Heart left ventricle (tissue), 16 donors: ENCODE measurements at regions of chr20 and their contacts with region 1.

Region 1: DNA sequence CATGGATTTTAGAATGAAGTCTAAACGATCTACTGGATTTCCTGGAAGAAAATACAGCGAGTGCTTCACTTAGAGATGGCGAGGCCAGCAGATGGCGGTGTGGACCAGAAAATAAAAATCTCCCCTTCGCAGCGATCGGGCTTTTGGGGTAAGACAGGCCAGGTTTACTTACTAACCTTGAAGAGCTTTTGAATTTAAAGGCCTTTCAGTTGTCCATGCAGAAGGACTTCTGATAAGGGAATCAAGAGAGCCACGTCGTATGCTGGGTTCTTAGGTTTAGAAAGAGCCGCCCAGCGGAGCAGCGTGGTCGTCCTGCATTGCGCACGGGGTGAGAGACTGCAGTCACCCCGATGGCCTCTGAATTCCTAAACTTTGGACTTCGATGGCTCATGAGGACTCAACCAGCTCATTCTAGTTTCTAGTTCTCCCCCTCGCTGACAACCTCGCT is 125.2 kb upstream of the RALGAPA2 start:
- DNase-seq: peak in 3 of 5 donors; percentile 32 to 40 (median 39)
- ATAC-seq: peak in 2 of 4 donors; percentile 49 to 54
- H3K4me3 ChIP-seq: peak overlapping the region in 8 of 12 donors; percentile 18 to 43 (median 20)
- H3K27ac ChIP-seq: no peak overlapping the region
- H3K4me1 ChIP-seq: peaks cover 0 to 3% (median 0%) of the 10 kb centered on the region in 12 donors
- H3K27me3 ChIP-seq: peaks cover 0 to 45% (median 2%) of the 10 kb centered on the region in 9 donors
- CTCF ChIP-seq: peak; percentile 45 to 80 (median 68)
- POLR2A ChIP-seq: no peak

Region 2: DNA sequence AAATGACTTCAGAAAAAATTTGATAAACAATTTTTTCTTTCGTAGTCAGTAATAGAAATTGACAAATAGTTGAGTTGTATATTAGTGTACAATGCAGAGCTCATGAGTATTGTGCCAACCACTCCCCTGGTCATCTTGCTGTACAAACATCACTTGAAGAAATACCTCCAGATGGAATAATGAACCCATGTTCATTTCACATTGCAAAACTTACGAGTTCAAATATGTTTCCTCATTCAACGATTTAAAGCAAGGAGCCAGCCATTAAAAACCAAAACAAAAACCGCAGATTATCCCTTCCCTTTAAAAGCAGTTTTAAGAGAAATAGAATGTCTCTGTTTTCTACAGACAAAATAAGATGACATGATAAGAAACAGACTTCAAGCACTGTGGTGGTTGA is 187.7 kb before region 1 on chr20:
- intact Hi-C with region 1: no loop called
- DNase-seq: no peak
- ATAC-seq: no peak
- H3K4me3 ChIP-seq: no peak overlapping the region
- H3K27ac ChIP-seq: no peak overlapping the region
- H3K4me1 ChIP-seq: no peaks in the 10 kb centered on the region
- H3K27me3 ChIP-seq: no peaks in the 10 kb centered on the region
- CTCF ChIP-seq: no peak
- POLR2A ChIP-seq: no peak

Region 3: GRCh38 chr20:20786428-20786827 is 51.2 kb before region 1 on chr20:
- intact Hi-C with region 1: loop called in 1 of 10 experiments (anchors 5 kb)
- DNase-seq: peak in 1 of 5 donors; percentile 58
- ATAC-seq: no peak
- H3K4me3 ChIP-seq: no peak overlapping the region
- H3K27ac ChIP-seq: no peak overlapping the region
- H3K4me1 ChIP-seq: peaks cover 0 to 22% (median 17%) of the 10 kb centered on the region in 12 donors
- H3K27me3 ChIP-seq: no peaks in the 10 kb centered on the region
- CTCF ChIP-seq: no peak
- POLR2A ChIP-seq: no peak

Region 4: DNA sequence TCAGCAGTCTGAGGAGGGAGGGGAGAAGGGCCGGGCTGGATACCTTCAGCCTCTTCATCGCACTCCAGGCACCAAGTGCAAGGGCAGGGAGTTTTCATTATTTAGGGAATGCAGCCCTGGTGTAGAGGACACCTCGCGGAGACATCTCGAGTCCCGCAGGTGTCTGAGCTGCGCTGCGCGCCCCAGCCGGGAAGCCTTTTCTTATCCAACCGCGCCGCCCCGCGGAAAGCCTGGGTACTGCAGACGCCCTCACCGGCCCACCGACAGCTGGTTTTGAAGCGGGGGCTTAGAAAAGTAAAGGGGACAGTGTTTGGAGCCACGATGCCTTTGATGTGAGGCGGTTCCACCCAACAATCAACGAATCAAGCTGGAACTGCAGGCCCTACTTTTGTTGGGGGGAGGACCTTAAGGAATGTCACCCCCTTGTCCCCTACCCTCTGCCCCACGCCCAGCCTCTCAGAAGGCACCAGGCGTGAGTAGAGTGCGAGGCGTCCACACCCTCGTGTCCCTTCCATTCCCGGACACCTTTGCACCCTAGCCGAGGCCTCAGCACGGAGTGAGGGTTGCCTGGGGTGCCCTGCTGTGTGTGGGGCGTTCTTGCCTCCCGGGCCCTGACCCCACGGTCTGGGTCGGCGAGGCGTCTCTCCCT is 667.7 kb after region 1 on chr20:
- intact Hi-C with region 1: loop called in 7 of 10 experiments (anchors 5 to 10 kb)
- DNase-seq: peak; percentile 36 to 86 (median 55)
- ATAC-seq: peak in 3 of 4 donors; percentile 48 to 76 (median 70)
- H3K4me3 ChIP-seq: peak overlapping the region in 9 of 12 donors; percentile 22 to 57 (median 44)
- H3K27ac ChIP-seq: no peak overlapping the region
- H3K4me1 ChIP-seq: peaks cover 0 to 31% (median 19%) of the 10 kb centered on the region in 12 donors
- H3K27me3 ChIP-seq: peaks cover 51 to 98% (median 76%) of the 10 kb centered on the region in 9 donors
- CTCF ChIP-seq: peak; percentile 88 to 97 (median 93)
- POLR2A ChIP-seq: no peak

Region 5: DNA sequence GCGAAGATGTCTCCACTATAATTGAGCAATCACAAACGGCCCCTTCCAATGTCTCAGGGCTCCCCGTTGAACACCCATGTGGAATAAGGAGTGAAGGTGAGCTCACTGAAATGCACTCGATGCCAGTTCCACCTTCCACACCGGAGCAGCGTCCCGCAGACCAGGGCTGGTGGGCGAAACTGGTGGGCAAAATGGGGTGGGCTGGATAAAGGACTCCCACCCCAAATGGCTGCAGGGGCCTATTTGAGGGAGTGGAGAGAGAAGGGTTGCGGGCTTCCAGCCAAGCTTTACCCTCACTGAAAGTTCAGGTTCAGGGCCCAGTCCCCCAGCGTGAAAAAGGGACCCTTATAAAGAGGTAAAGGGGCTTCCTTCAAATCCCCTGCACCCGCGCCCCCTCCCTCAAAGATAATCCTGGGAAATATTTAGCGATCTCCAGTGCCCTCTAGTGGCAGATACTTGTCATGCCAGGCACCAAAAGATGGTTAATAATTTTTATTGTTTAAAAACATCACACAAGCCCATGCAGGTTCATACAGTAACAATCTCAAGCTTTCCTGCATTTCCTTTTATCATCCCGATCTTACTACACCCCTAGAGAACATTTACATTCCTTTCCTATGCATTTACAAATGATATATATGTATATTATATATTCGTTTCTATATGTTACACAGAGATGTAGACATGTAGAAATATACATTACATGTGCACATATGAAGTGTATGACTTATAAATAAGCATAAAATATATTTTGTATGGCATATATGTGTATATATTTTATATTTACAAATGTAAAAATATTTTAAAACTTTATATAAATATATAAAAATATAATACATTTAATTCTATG is 734.5 kb after region 1 on chr20:
- intact Hi-C with region 1: loop called in 4 of 10 experiments (anchors 2 to 5 kb)
- DNase-seq: no peak
- ATAC-seq: no peak
- H3K4me3 ChIP-seq: no peak overlapping the region
- H3K27ac ChIP-seq: no peak overlapping the region
- H3K4me1 ChIP-seq: no peaks in the 10 kb centered on the region
- H3K27me3 ChIP-seq: peaks cover 0 to 41% (median 17%) of the 10 kb centered on the region in 9 donors
- CTCF ChIP-seq: peak; percentile 74 to 89 (median 84)
- POLR2A ChIP-seq: no peak

Region 6: GRCh38 chr20:21615617-21616080 is 778.1 kb after region 1 on chr20:
- intact Hi-C with region 1: loop called in 1 of 10 experiments (anchors 2 kb)
- DNase-seq: peak in 4 of 5 donors; percentile 15 to 42 (median 32)
- ATAC-seq: peak in 3 of 4 donors; percentile 54 to 72 (median 64)
- H3K4me3 ChIP-seq: no peak overlapping the region
- H3K27ac ChIP-seq: no peak overlapping the region
- H3K4me1 ChIP-seq: no peaks in the 10 kb centered on the region
- H3K27me3 ChIP-seq: peaks cover 0 to 28% (median 5%) of the 10 kb centered on the region in 9 donors
- CTCF ChIP-seq: peak; percentile 40 to 75 (median 64)
- POLR2A ChIP-seq: no peak

Region 7: DNA sequence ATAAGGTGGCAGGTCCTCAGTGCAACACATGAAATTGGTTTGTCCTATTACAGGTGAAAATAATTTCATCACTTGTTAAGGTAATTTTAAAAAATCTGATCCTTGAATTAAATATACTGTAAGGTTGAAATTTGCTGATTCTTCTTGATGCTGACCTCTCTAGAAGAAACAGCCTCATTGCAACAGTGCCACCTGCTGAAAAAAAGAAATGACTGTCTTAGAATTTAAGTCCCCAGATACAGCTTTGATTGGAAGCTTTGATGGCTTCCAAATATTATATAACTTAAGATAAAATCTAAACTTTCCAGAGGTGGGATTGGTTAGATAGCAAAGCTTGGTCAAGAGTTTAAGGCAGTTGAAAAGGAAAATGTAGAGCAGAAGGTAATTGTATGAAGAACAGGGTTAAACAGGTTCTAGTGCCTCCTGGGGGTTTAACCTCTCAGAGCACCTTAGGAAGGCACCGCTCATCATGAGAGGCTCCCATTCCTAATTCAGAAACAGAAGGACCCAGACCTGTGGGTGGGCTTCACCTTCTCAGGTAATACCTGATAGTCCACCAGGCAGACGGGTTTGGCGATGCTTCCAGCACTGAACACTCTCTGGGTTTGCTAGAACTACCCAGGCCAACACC is 1268.8 kb after region 1 on chr20:
- intact Hi-C with region 1: loop called in 1 of 10 experiments (anchors 10 kb)
- DNase-seq: no peak
- ATAC-seq: no peak
- H3K4me3 ChIP-seq: no peak overlapping the region
- H3K27ac ChIP-seq: no peak overlapping the region
- H3K4me1 ChIP-seq: no peaks in the 10 kb centered on the region
- H3K27me3 ChIP-seq: peaks cover 0 to 14% (median 0%) of the 10 kb centered on the region in 9 donors
- CTCF ChIP-seq: peak in 11 of 12 donors; percentile 27 to 61 (median 37)
- POLR2A ChIP-seq: no peak